ENCODE measurements at regions of chr12 and their contacts with region 1.

Region 1: GRCh38 chr12:104057771-104058197 is 6.5 kb upstream of the HCFC2 start:
- DNase-seq: peak; percentile 19 to 35 (median 28)
- ATAC-seq: peak; percentile 77
- H3K4me3 ChIP-seq: no peak overlapping the region
- H3K27ac ChIP-seq: no peak overlapping the region
- H3K4me1 ChIP-seq: no peaks in the 10 kb centered on the region
- H3K27me3 ChIP-seq: peaks cover 13 to 25% of the 10 kb centered on the region in 2 experiments; a peak in 4 of 5 replicates
- CTCF ChIP-seq: peak; percentile 63 to 81 (median 75)
- EP300 ChIP-seq: no peak
- POLR2A ChIP-seq: no peak
- RAD21 ChIP-seq: peak; percentile 50 to 78

Region 2: GRCh38 chr12:102669036-102669435 is 1388.7 kb before region 1 on chr12:
- CTCF ChIA-PET with region 1: no interaction called
- POLR2A ChIA-PET with region 1: no interaction called
- in situ Hi-C with region 1: no loop called
- intact Hi-C with region 1: no loop called
- DNase-seq: no peak
- ATAC-seq: no peak
- H3K4me3 ChIP-seq: no peak overlapping the region
- H3K27ac ChIP-seq: peak overlapping the region; percentile 60; the same call in 1 of the 3 replicates
- H3K4me1 ChIP-seq: no peaks in the 10 kb centered on the region; a peak in 1 of 5 replicates
- H3K27me3 ChIP-seq: no peaks in the 10 kb centered on the region
- CTCF ChIP-seq: no peak
- EP300 ChIP-seq: no peak
- POLR2A ChIP-seq: no peak
- RAD21 ChIP-seq: no peak

Region 3: GRCh38 chr12:103884316-103884715 is 173.5 kb before region 1 on chr12:
- CTCF ChIA-PET with region 1: no interaction called
- POLR2A ChIA-PET with region 1: no interaction called
- in situ Hi-C with region 1: no loop called
- intact Hi-C with region 1: loop called (anchors 5 kb)
- DNase-seq: peak in 3 of 4 experiments; percentile 24 to 30 (median 25)
- ATAC-seq: 0 out of 3 replicates have a peak, but pooled peaks have one; percentile 38
- H3K4me3 ChIP-seq: no peak overlapping the region
- H3K27ac ChIP-seq: no peak overlapping the region
- H3K4me1 ChIP-seq: no peaks in the 10 kb centered on the region
- H3K27me3 ChIP-seq: peaks cover 9 to 21% of the 10 kb centered on the region in 2 experiments; a peak in 3 of 5 replicates
- CTCF ChIP-seq: peak; percentile 18 to 70 (median 48); a peak in 3 of 6 replicates
- EP300 ChIP-seq: no peak
- POLR2A ChIP-seq: no peak
- RAD21 ChIP-seq: peak; percentile 73 to 75

Region 4: DNA sequence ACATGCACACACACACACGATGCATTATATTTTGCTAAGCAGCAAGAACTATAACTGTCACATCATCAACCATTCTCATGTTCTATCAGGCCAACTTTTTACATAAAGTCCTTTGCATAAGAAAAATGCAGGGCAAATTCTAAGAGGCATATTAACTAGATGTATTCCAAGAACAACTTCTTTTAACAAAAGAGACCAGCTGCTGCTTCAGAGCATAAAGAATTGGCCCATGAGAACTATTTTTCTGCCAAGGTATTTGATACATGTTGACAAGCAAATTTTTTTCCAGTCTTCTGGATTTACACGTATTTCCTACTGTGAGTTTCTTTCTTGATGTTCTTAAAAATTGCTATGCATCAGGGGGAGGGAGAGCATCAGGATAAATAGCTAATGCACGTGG is 35.0 kb before region 1 on chr12:
- CTCF ChIA-PET with region 1: no interaction called
- POLR2A ChIA-PET with region 1: no interaction called
- in situ Hi-C with region 1: no loop called
- intact Hi-C with region 1: no loop called
- DNase-seq: no peak
- ATAC-seq: no peak
- H3K4me3 ChIP-seq: no peak overlapping the region
- H3K27ac ChIP-seq: no peak overlapping the region
- H3K4me1 ChIP-seq: no peaks in the 10 kb centered on the region
- H3K27me3 ChIP-seq: peaks cover 12 to 17% of the 10 kb centered on the region in 2 experiments; a peak in 4 of 5 replicates
- CTCF ChIP-seq: no peak
- EP300 ChIP-seq: no peak
- POLR2A ChIP-seq: no peak
- RAD21 ChIP-seq: no peak

Region 5: DNA sequence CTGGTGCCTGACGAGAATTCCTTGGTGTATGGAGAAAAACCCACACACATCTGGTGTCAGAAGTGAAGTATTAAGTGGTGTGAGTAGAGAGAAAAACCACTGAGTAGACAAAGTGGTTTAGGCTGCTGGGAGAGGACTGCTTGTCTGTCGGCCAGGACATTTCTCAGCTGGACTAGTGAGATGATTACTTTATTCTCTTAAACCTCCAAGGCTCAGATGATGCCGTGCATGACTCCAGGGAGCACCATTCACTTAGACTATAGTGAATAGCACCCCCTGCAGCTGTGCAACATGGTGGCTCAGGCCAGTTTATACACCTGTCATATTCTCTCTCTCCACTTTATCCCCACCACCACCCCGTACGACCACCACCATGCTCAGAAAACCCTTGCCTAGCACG is 108.7 kb after region 1 on chr12:
- CTCF ChIA-PET with region 1: no interaction called
- POLR2A ChIA-PET with region 1: no interaction called
- in situ Hi-C with region 1: no loop called
- intact Hi-C with region 1: loop called (anchors 1 kb)
- DNase-seq: peak in 2 of 4 experiments; percentile 17 to 21
- ATAC-seq: peak; percentile 83
- H3K4me3 ChIP-seq: no peak overlapping the region
- H3K27ac ChIP-seq: no peak overlapping the region
- H3K4me1 ChIP-seq: peaks cover 0 to 4% of the 10 kb centered on the region in 2 experiments; a peak in 4 of 5 replicates
- H3K27me3 ChIP-seq: no peaks in the 10 kb centered on the region
- CTCF ChIP-seq: peak in 2 of 3 experiments; percentile 29 to 51; a peak in 2 of 6 replicates
- EP300 ChIP-seq: no peak
- POLR2A ChIP-seq: no peak
- RAD21 ChIP-seq: peak in 1 of 2 experiments; percentile 45; a peak in 1 of 4 replicates

Measured in K562 (cell line).